Mammary epithelial cell (primary cell): ENCODE measurements at regions of chr20 and their contacts with region 1.

Region 1: GRCh38 chr20:51800060-51800794 is 2.1 kb downstream of the SALL4 start:
- DNase-seq: peak; percentile 8
- H3K4me3 ChIP-seq: peak overlapping the region; percentile 31 to 42 (median 31)
- H3K27ac ChIP-seq: no peak overlapping the region
- H3K4me1 ChIP-seq: peaks cover 7% of the 10 kb centered on the region
- H3K27me3 ChIP-seq: peaks cover 17% of the 10 kb centered on the region
- CTCF ChIP-seq: peak; percentile 61 to 93

Region 2: DNA sequence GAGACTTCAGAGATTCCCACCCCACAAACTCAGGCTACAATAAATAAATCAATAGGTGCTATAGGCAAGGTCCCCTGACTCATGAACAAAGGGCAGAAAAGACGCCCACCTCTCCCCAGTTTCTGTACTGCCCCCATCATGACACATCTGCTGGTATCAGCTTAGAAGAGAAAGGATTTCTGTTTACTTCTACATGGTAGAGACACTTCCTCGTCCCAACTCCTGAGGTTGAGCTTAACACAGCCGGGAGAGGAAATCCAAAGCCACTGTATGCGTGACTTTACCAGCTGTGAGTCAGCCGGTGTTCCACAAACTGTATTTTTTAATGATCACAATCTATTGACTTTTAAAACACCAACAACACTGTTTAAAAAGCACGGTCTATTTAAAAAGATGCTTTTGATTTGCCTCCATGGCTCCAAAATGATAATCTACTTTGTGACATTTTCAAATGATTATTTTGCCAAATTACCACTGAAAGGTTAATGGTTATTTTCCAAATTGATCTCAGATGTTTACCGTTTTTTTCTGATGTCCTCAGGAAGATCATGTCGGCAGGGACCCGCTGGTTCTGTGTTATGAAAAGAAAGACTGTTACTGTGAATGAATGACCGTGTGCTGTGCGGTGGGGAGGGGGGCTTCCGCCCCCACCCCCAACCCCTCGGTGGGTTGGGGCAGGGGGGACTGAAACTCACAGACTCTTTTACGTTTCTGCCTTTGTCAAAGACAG is 104.5 kb before region 1 on chr20:
- CTCF ChIA-PET with region 1: no interaction called
- dilution Hi-C with region 1: no loop called
- in situ Hi-C with region 1: no loop called
- intact Hi-C with region 1: loop called (anchors 5 kb)
- DNase-seq: peak; percentile 58
- H3K4me3 ChIP-seq: no peak overlapping the region
- H3K27ac ChIP-seq: peak overlapping the region; percentile 20
- H3K4me1 ChIP-seq: peaks cover 11% of the 10 kb centered on the region
- H3K27me3 ChIP-seq: no peaks in the 10 kb centered on the region
- CTCF ChIP-seq: no peak

Region 3: GRCh38 chr20:51738947-51739456 is 61.2 kb before region 1 on chr20:
- CTCF ChIA-PET with region 1: no interaction called
- dilution Hi-C with region 1: loop called (anchors 5 kb)
- in situ Hi-C with region 1: no loop called
- intact Hi-C with region 1: no loop called
- DNase-seq: no peak
- H3K4me3 ChIP-seq: no peak overlapping the region
- H3K27ac ChIP-seq: no peak overlapping the region
- H3K4me1 ChIP-seq: no peaks in the 10 kb centered on the region
- H3K27me3 ChIP-seq: no peaks in the 10 kb centered on the region
- CTCF ChIP-seq: no peak

Region 4: GRCh38 chr20:51966291-51966971 is 166.2 kb after region 1 on chr20:
- CTCF ChIA-PET with region 1: no interaction called
- dilution Hi-C with region 1: no loop called
- in situ Hi-C with region 1: no loop called
- intact Hi-C with region 1: loop called (anchors 5 kb)
- DNase-seq: peak; percentile 36
- H3K4me3 ChIP-seq: no peak overlapping the region
- H3K27ac ChIP-seq: no peak overlapping the region
- H3K4me1 ChIP-seq: no peaks in the 10 kb centered on the region
- H3K27me3 ChIP-seq: no peaks in the 10 kb centered on the region
- CTCF ChIP-seq: peak; percentile 46 to 76

Region 5: DNA sequence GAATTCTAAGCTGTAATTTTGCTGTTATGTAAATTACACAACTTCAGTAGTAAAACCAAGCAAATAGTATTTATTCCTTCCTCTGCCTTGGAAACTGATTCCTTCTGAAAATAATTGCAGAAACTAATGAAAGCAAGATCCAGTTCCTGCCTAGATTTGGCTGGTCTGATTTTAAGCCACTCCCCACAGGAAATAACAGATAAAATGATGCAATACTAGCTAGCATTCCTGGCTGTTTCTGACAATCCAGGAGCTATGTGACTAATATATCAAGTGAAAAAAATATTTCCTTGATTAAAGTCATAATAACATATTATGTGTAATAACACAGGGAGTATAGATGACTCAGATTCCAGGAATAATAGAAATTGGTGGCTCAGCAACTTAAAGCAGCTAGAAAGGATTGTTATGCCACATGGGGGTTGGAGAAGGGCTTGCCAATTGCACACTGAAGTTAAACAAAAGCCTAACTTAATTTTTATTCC is 184.7 kb after region 1 on chr20:
- CTCF ChIA-PET with region 1: interaction called, 10 read pairs
- dilution Hi-C with region 1: no loop called
- in situ Hi-C with region 1: no loop called
- intact Hi-C with region 1: no loop called
- DNase-seq: peak; percentile 87
- H3K4me3 ChIP-seq: no peak overlapping the region
- H3K27ac ChIP-seq: peak overlapping the region; percentile 63
- H3K4me1 ChIP-seq: peaks cover 13% of the 10 kb centered on the region
- H3K27me3 ChIP-seq: no peaks in the 10 kb centered on the region
- CTCF ChIP-seq: no peak

Region 6: DNA sequence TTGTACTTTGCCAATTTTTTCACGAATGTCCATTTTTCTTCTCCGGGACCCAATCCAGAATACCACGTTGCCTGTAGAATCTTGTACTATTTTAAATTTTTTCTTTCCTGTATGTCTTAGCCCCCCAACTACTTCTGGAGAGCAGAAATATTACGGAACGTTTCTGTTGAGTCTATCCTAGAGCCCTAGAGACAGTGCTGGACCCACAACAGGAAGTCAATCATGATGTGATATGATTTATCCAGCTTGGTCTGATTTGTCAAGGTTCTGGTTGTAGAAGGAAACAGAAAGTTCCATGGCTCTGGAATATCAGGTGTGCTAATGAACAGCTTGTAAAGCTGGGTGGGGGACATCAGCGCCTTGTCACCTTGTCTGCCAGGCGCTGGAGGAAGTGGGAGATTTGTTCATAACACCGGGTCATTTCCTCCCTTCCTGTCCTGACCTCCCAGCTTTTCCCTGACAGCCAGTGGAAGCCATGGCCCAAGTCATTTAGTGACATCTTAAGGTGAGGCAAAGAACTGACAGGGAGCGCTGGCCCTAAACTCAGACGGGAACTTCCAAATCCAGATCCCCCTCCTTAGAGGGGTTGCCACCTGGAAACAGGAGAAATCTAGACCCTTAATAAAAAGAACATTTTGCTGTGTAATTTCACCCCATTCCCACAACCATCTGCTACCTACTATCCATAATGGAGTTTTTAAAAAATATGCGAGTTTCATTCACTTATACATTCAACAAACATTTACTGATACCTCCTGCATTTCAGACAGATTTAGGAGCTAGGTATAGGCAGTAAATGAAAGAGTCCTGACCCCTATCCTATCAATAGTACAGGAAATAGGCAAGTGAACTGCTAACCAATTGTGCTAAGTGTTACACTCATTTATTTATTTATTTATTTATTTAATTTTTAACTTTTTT is 260.8 kb after region 1 on chr20:
- CTCF ChIA-PET with region 1: no interaction called
- dilution Hi-C with region 1: no loop called
- in situ Hi-C with region 1: no loop called
- intact Hi-C with region 1: loop called (anchors 1 kb)
- DNase-seq: no peak
- H3K4me3 ChIP-seq: no peak overlapping the region
- H3K27ac ChIP-seq: no peak overlapping the region
- H3K4me1 ChIP-seq: peaks cover 5% of the 10 kb centered on the region
- H3K27me3 ChIP-seq: no peaks in the 10 kb centered on the region
- CTCF ChIP-seq: peak in 1 of 2 donors; percentile 43

Region 7: DNA sequence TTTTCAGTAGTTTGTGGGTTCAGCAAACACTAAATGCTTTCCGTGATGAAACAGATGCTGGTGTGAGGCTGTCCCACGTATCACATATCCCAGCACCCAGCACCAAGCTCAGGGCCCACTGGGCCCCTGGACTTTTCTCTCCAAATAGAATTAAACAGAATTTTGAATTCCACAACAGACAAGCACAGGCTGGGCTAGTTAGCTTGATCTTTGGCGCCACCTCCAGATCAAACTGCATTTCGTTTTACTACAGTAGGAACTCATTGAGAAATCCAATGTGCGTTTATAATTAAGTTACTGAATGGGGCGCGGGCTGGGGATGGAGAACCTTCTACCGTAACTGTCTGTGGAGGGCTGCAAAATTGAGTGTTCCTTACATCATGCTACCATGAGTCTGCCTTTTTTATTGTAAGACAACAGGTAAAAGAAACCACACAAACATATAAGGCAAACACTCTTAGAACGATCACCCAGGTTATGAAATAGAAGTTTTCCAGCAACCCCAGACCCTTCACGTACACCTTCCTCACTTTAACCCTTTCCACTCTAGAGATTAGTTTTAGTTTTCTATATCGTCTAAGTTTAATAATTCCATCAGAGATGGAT is 283.5 kb after region 1 on chr20:
- CTCF ChIA-PET with region 1: no interaction called
- dilution Hi-C with region 1: no loop called
- in situ Hi-C with region 1: no loop called
- intact Hi-C with region 1: loop called (anchors 1 kb)
- DNase-seq: peak; percentile 25
- H3K4me3 ChIP-seq: no peak overlapping the region
- H3K27ac ChIP-seq: no peak overlapping the region
- H3K4me1 ChIP-seq: no peaks in the 10 kb centered on the region
- H3K27me3 ChIP-seq: no peaks in the 10 kb centered on the region
- CTCF ChIP-seq: peak; percentile 55 to 77